Right ventricle myocardium inferior (tissue), 1 donor: ENCODE measurements at regions of chr3 and their contacts with region 1.

Region 1: DNA sequence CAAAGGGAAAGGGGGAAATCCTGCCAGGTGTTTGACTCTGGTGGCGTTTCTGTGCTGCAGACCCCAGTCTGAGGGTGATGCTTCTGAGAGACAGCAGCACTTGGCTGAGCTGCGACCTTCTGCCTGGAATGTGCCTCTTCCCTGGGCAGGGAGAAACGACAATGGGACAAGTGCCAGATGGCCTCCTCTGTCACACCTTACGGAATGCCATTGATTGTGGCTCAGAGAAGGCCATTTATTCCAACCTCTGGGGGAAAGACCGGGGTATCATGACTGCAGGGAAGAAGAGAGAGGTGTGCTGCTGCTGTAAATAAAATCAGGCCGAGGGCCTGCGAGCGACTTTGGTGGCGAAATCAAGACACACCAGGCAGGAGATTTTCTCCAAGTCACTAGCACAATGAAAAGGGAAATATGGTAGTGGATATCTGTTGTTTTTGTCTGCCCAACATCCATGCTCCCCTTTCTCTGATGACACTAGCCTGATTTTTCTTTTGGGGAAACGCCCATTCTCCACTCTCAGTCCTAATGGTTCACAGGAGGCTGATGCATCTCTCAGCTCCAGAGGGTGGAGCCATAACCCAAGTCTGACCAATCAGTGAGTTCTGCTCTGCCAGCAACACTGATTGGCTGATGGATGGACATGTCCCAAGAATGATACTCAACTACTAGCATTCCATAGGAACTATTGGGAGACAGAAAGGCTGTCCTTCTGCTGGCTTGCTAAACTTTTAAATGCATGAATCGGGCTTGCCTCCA is 336.1 kb downstream of the FOXP1 start:
- DNase-seq: no peak
- ATAC-seq: no peak

Region 2: DNA sequence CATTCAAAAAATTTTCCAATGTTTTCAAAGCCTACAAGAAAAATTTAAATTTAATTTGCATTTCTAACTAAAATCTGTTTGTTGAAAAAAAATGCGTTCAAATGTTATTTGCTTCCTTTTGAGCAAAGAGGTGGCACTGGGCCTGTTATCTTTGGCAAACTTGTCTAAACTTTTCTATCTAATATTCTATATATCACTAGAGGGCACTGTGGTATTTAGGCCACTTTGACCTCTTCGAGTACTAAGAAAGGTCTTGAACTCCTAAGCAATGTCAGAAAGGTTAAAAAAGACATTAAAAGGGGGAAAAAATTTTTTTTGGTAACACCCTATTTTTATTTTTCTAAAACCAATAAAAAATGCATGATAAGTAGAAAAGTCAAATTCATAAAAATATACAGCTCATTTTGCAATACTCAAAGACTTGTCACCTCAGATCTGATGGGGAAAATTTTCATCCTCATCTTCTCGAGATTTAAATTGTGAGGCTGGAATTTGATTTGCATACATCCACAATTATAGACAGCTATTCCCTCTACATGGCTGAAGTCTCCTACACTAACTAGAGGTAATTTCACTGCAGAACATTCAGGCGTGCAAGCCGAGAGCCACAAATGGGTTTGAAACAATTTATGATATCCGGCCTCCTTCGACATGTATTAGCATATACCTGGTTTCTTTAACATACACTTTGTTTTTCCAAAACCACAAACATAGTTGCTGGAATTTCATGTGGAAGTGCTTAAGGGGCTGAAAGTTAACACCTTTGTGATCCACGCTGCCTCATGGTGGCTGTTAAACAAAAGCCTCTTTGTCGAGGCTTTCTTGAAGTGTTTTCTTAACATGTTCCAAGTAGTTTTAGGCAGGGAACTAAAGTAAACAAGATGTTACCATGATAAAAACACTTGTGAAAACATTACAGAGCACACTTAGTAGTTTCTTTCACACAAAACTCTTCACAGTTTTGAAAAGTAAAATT is 240.3 kb before region 1 on chr3:
- intact Hi-C with region 1: loop called (anchors 10 kb)
- DNase-seq: no peak
- ATAC-seq: peak; percentile 58

Region 3: DNA sequence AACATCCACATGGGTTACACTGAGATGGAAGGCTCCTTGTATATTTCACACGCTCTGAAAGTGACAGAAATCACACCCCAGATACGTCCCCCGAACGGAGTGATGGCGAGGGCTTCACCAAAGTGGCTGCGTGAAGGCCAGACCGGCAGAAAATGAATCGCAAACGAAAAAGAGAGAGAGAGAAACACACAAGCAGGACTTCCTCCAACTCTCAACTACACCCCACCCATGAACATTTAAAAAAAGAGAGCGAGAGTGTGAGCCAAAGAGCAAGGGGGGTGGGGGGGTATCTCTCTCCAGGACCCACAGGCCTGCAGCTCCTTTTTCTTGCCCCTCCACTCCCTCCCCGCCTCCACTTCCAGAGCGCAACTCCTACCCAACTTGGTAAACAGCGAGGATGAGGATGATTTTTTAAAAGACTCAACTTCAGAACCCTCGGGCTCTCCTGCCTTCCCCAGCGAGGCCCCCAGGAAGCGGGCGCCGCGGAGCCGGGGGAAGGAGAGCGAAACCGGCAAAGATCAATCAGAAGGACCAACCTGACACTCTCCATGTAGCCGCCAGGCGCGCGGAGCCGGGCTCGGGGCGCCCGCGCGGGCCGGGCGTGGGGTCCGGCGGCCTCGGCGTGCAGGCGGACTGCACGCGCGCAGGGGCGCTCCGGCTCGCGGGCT is 183.0 kb before region 1 on chr3:
- intact Hi-C with region 1: loop called (anchors 5 kb)
- DNase-seq: peak; percentile 72
- ATAC-seq: peak; percentile 30

Region 4: GRCh38 chr3:71130471-71131374 is 116.7 kb before region 1 on chr3:
- intact Hi-C with region 1: loop called (anchors 5 kb)
- DNase-seq: peak; percentile 77
- ATAC-seq: peak; percentile 76

Region 5: GRCh38 chr3:71226565-71227269 is 20.7 kb before region 1 on chr3:
- intact Hi-C with region 1: loop called (anchors 1 kb)
- DNase-seq: peak; percentile 74
- ATAC-seq: peak; percentile 94

Region 6: GRCh38 chr3:71305231-71306206 is 58.1 kb after region 1 on chr3:
- intact Hi-C with region 1: loop called (anchors 5 kb)
- DNase-seq: no peak
- ATAC-seq: peak; percentile 86

Region 7: GRCh38 chr3:71345429-71346040 is 98.1 kb after region 1 on chr3:
- intact Hi-C with region 1: no loop called
- DNase-seq: no peak
- ATAC-seq: peak; percentile 84